Prostate gland (tissue), 2 donors: ENCODE measurements at regions of chr11 and their contacts with region 1.

Region 1: GRCh38 chr11:63738720-63739360 is 29.7 kb downstream of the ZFTA start:
- DNase-seq: peak; percentile 69
- H3K4me3 ChIP-seq: no peak overlapping the region
- H3K27ac ChIP-seq: no peak overlapping the region
- H3K4me1 ChIP-seq: no peaks in the 10 kb centered on the region
- H3K27me3 ChIP-seq: no peaks in the 10 kb centered on the region
- CTCF ChIP-seq: peak; percentile 81 to 91 (median 87)
- POLR2A ChIP-seq: no peak

Region 2: DNA sequence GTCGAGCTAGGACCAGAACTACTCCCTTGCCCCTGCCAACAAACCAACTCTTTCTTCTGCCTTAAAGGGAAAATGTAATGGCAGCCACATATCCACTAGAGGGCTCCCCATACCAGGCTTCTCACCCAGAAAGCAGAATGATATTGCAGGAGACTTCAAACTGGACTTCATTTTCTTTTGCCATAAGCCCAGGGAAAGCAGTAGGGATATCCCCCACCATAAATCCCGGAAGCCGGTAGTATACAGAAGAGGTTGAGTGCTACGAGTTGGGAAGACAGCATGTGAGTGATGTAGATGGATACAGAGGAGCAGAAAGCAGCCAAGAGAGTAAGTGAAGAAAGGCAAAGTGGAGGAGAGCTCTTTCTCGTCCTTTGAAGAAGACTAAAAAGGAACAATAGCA is 259.9 kb before region 1 on chr11:
- intact Hi-C with region 1: loop called (anchors 5 kb)
- DNase-seq: peak; percentile 50
- H3K4me3 ChIP-seq: no peak overlapping the region
- H3K27ac ChIP-seq: no peak overlapping the region
- H3K4me1 ChIP-seq: no peaks in the 10 kb centered on the region
- H3K27me3 ChIP-seq: no peaks in the 10 kb centered on the region
- CTCF ChIP-seq: peak; percentile 68 to 93 (median 86)
- POLR2A ChIP-seq: no peak

Region 3: DNA sequence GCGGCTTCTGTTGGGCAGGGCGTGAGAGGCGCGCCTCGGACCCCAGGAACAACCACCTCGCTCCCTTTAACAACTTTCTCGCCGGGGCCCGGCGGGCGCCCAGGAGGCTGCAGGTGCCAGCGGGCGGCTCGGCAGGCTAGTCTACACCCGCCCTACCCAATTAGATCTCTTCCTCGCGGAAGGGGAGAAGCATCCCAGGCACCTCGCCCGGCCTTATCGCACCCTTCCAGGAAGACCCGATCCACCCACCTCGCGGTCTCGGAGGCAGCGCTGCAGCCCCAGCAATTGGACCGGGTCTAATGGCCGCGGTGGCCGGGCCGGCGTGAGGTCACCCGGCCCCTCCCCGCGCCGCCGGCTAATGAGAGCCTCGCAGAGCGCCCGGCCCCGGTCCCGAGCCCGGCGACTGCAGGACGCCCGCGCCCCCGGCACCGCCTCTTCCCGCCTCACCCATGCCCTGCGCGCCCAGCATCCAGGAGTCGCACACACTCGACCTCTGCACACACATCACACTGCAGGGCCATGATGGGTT is 124.6 kb before region 1 on chr11 and contains the start of gene PLAAT3:
- intact Hi-C with region 1: no loop called
- DNase-seq: no peak
- H3K4me3 ChIP-seq: peak within 1 kb of the TSS; percentile 47 to 52
- H3K27ac ChIP-seq: peak within 1 kb of the TSS; percentile 33 to 66
- H3K4me1 ChIP-seq: no peaks in the 10 kb centered on the region
- H3K27me3 ChIP-seq: peaks cover 2% of the 10 kb centered on the region
- CTCF ChIP-seq: no peak
- POLR2A ChIP-seq: peak; percentile 25
- total RNA-seq, gene PLAAT3: 7.0 to 118 TPM

Region 4: DNA sequence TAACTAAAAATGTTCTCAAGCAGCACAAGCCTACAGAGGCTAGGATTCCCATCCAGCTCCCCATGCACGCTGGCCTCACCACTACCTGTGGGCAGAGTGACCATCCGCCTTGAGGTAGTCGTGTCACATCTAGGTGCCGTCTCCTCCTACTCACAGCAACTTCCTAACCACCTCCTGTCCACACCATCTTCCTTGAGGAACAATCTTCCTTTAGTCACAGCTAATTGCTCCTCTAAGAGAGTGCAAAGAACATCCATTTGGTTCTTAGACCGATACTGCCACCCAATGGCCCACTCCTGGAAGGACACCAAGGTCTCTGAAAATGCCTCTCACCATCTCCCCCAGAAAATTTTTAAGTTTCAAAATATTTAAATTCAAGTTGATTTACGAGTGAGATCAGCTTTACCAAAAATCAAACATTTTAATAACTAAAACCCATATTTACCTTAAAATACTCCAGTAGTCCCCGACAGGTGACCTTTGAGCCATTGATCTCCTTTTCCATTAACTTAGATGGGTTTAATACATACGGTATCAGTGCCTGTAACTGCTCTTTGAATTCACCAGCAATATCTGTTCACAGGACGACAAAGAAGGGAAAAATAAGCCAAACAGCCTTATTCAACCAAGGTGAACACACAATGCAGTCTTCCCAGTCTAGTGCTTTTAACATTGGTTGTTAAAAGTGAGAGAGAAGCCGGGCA is 102.9 kb before region 1 on chr11:
- intact Hi-C with region 1: loop called (anchors 5 kb)
- DNase-seq: peak; percentile 48
- H3K4me3 ChIP-seq: no peak overlapping the region
- H3K27ac ChIP-seq: no peak overlapping the region
- H3K4me1 ChIP-seq: no peaks in the 10 kb centered on the region
- H3K27me3 ChIP-seq: no peaks in the 10 kb centered on the region
- CTCF ChIP-seq: peak in 3 of 4 experiments; percentile 66 to 84 (median 79)
- POLR2A ChIP-seq: no peak

Region 5: DNA sequence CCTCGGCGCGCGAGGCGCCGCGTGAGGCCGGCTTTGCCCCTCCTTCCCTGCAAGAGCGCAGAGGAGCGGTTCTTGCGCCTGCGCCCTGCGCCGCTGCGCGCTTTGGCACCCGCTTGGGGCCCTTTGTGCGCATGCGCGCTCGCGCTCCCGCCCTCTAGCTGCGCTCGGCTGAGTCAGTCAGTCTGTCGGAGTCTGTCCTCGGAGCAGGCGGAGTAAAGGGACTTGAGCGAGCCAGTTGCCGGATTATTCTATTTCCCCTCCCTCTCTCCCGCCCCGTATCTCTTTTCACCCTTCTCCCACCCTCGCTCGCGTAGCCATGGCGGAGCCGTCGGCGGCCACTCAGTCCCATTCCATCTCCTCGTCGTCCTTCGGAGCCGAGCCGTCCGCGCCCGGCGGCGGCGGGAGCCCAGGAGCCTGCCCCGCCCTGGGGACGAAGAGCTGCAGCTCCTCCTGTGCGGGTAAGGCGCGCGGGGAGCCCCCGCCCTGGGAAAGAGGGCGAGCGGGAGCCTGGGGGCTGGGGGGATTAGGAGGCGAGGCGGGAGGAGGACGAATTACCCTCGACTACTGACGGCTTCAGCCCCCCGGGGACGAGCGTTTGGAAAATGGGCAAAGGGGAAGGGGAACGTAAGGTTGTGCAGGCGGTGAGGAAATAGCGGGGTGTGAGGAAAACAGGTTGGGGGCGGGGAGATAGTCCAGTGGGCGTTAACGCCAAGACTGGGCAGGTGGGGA is 57.4 kb before region 1 on chr11 and contains the start of gene RTN3:
- intact Hi-C with region 1: loop called (anchors 10 kb)
- DNase-seq: peak; percentile 95
- H3K4me3 ChIP-seq: peak within 1 kb of the TSS; percentile 76 to 89
- H3K27ac ChIP-seq: peak within 1 kb of the TSS; percentile 92 to 97
- H3K4me1 ChIP-seq: peaks cover 4% of the 10 kb centered on the region
- H3K27me3 ChIP-seq: no peaks in the 10 kb centered on the region
- CTCF ChIP-seq: peak in 3 of 4 experiments; percentile 64 to 81 (median 66)
- POLR2A ChIP-seq: peak; percentile 98
- total RNA-seq, gene RTN3: 74.1 to 88.8 TPM